H1 (cell line): ENCODE measurements at regions of chr9 and their contacts with region 1.

Region 1: GRCh38 chr9:35071814-35072460 is 488 bp downstream of the VCP start:
- DNase-seq: peak; percentile 59 to 89
- H3K4me3 ChIP-seq: peak overlapping the region; percentile 75 to 94 (median 87)
- H3K27ac ChIP-seq: peak overlapping the region; percentile 93
- H3K4me1 ChIP-seq: peaks cover 4 to 12% (median 7%) of the 10 kb centered on the region in 4 experiments
- H3K27me3 ChIP-seq: no peaks in the 10 kb centered on the region
- CTCF ChIP-seq: peak; percentile 26 to 48 (median 45); a peak in 3 of 4 replicates
- EP300 ChIP-seq: no peak
- POLR2A ChIP-seq: peak in 1 of 2 experiments; percentile 90; a peak in 1 of 3 replicates
- RAD21 ChIP-seq: peak in 1 of 2 experiments; percentile 8; a peak in 1 of 4 replicates

Region 2: DNA sequence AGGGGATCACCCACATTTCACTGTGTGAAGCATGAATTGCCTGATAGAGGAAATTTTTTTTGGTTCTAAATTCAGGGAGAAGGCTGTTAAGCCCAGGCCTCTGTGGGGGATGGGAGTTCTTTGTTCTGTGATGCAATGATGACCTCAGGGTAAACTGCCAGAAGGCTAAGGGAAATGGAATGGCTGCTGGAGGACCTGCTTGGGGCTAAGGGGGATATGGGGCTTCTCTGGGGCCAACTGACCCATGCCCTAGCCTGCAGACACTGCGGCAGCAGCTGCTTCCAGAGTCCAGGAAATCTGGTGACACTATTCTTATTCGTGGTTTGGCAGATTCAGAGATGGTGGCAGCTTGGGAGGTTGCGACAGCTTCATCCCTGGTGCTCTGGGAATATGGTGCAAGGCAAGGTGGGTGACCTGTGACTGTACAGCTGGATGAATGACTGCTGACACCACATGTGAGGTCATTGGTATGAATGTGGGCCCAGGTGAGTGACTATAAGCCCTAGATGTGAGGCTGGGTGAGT is 29.8 kb before region 1 on chr9:
- CTCF ChIA-PET with region 1: no interaction called
- POLR2A ChIA-PET with region 1: interaction called, 12 read pairs
- DNase-seq: no peak
- H3K4me3 ChIP-seq: no peak overlapping the region
- H3K27ac ChIP-seq: no peak overlapping the region
- H3K4me1 ChIP-seq: peaks cover 0 to 2% (median 0%) of the 10 kb centered on the region in 4 experiments; a peak in 2 of 7 replicates
- H3K27me3 ChIP-seq: no peaks in the 10 kb centered on the region
- CTCF ChIP-seq: no peak
- EP300 ChIP-seq: no peak
- POLR2A ChIP-seq: no peak
- RAD21 ChIP-seq: no peak

Region 3: DNA sequence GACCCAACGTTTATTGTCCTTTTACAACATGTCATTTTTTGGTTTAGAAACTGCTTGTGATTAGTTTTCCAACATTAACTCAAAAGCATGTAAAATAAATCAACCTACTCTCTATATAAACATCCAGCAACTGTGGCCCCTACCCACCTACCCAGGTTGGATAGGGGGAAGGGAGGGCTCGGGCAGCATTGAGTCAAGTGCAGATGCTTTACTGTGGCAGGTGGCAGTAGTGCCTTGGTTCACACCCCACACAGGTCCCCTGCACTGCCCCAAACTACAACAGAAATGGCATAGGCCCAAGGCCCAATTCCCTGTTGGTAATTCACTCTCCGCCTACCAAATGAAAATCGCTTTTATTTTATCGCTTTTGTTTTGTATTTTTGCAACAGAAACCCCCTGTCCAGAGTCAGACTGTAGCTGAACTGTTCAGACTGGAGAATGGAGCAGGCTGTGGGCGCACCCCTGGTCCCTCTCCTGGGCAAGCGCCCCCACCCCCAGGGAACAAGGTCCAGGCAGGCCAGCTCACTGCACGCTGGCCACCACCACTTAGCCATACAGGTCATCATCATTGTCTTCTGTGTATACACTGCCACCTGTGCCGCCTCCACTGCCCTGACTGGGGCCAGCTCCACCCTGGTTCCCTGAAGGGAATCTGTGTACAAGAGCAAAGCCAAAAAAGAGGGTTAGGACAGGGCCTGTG is 15.2 kb before region 1 on chr9:
- CTCF ChIA-PET with region 1: interaction called, 50 read pairs
- POLR2A ChIA-PET with region 1: interaction called, 43 read pairs
- DNase-seq: no peak
- H3K4me3 ChIP-seq: no peak overlapping the region
- H3K27ac ChIP-seq: no peak overlapping the region
- H3K4me1 ChIP-seq: no peaks in the 10 kb centered on the region
- H3K27me3 ChIP-seq: no peaks in the 10 kb centered on the region
- CTCF ChIP-seq: no peak
- EP300 ChIP-seq: no peak
- POLR2A ChIP-seq: no peak
- RAD21 ChIP-seq: no peak

Region 4: DNA sequence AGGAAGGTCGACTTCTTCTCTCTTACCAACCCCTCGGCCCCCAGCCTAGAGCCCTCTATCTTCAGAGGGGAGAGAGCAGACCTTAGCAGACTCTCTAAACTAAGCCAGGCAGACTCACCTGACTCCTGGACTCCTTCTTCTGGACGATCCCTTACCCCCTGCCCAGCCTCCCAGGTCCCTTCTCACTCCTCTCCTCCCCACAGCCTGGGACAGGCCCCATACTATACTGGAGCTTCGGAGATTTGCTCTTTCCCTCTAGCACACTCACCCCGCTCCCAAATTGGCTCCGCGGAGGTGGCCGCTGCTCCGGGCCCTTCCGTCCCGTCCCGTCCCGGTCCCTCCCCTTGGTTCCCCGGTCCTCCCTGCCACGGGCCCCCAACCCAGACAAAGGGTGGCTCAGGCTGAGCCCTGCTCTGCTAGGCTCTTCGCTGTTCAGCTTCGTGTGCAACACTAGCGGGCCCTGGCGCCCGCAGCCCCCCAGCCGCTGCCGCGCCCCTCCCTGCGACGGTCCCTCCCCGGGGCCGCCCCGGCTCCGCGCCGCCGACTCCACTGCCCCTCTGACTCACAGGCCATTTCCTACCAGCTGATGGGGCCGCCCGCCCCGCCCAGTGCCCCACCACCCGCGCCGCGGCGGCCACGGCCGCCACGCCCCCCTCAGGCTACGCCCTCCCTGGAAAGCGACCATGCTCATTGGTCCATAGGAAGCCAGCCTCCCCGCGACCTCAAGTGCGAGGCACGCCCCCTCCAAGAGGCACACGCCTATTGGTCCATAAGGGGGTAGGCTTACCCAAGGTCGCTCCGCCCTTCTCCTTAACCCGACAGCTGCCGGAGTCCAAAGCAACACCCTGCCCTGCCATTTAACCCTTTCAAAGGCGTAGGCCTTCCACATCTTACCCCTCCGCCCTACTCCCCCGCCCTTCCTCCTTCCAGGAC is 39.3 kb after region 1 on chr9:
- CTCF ChIA-PET with region 1: no interaction called
- POLR2A ChIA-PET with region 1: interaction called, 440 read pairs
- DNase-seq: peak; percentile 89 to 98
- H3K4me3 ChIP-seq: peak overlapping the region; percentile 53 to 87 (median 79)
- H3K27ac ChIP-seq: no peak overlapping the region
- H3K4me1 ChIP-seq: peaks cover 4 to 21% (median 10%) of the 10 kb centered on the region in 4 experiments; a peak in 6 of 7 replicates
- H3K27me3 ChIP-seq: no peaks in the 10 kb centered on the region
- CTCF ChIP-seq: no peak
- EP300 ChIP-seq: no peak
- POLR2A ChIP-seq: 0 out of 3 replicates have a peak, but pooled peaks of 1 of the 2 experiments have one; percentile 21
- RAD21 ChIP-seq: no peak